OCI-LY7 (cell line): ENCODE measurements at regions of chr1 and their contacts with region 1.

Region 1: GRCh38 chr1:230120926-230121381 is 53.9 kb downstream of the GALNT2 start:
- DNase-seq: peak; percentile 72
- H3K4me3 ChIP-seq: peak overlapping the region; percentile 40
- H3K27ac ChIP-seq: peak overlapping the region; percentile 95
- H3K4me1 ChIP-seq: peaks cover 78% of the 10 kb centered on the region
- CTCF ChIP-seq: peak; percentile 82

Region 2: GRCh38 chr1:229661022-229661877 is 459.7 kb before region 1 on chr1:
- CTCF ChIA-PET with region 1: no interaction called
- POLR2A ChIA-PET with region 1: no interaction called
- intact Hi-C with region 1: loop called (anchors 5 kb)
- DNase-seq: peak; percentile 79
- H3K4me3 ChIP-seq: no peak overlapping the region
- H3K27ac ChIP-seq: no peak overlapping the region
- H3K4me1 ChIP-seq: peaks cover 29% of the 10 kb centered on the region
- CTCF ChIP-seq: peak; percentile 94

Region 3: GRCh38 chr1:229694053-229694693 is 426.8 kb before region 1 on chr1:
- CTCF ChIA-PET with region 1: no interaction called
- POLR2A ChIA-PET with region 1: no interaction called
- intact Hi-C with region 1: loop called (anchors 5 kb)
- DNase-seq: peak; percentile 86
- H3K4me3 ChIP-seq: peak overlapping the region; percentile 42
- H3K27ac ChIP-seq: peak overlapping the region; percentile 97
- H3K4me1 ChIP-seq: peaks cover 77% of the 10 kb centered on the region
- CTCF ChIP-seq: no peak

Region 4: DNA sequence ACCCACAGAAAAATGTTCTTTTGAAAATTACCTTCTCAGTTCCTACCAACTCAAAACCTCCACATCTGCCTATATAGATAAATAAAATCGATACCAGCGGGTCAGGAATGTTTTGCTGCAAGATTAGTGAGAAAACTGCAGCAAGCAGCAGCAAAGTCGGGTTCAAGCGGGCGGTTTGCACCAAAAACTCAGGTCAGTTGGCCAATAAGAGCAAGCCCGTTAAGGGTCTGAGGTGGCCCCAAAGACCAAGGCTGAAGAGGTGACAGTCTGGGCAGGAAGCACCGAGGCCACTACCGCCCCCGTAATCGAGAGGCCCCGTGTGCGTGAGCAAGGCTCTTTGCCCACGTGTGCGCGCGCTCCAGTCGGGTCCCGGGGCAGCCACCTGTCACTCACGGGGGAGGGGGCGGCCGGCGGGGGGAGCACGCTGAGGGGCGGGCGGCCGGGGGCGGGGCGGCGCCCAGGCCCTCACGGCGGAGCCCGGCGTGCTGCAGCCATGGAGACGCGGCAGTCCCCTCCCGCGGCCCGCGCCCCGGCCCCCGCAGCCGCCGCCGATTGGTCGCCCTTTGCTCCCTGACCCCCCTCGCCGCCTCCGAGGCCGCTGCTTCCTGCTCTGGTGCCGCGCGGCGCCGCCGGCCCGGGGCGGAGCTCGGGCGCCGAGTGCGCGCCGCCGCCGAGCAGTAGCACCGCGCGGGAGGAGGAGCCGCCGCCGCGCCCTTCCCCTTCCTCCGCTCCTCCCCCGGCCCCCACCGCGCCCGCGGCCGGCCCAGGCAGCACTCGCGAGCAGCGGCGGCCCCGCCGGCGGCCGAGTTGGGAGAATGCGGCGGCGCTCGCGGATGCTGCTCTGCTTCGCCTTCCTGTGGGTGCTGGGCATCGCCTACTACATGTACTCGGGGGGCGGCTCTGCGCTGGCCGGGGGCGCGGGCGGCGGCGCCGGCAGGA is 54.2 kb before region 1 on chr1 and contains the start of gene GALNT2:
- CTCF ChIA-PET with region 1: no interaction called
- POLR2A ChIA-PET with region 1: interaction called, 5 read pairs
- intact Hi-C with region 1: loop called (anchors 1 kb)
- DNase-seq: peak; percentile 93
- H3K4me3 ChIP-seq: peak within 1 kb of the TSS; percentile 92
- H3K27ac ChIP-seq: peak within 1 kb of the TSS; percentile 53
- H3K4me1 ChIP-seq: peaks cover 26% of the 10 kb centered on the region
- CTCF ChIP-seq: no peak
- total RNA-seq, gene GALNT2: 26.3 and 29.9 TPM in 2 replicates

Region 5: DNA sequence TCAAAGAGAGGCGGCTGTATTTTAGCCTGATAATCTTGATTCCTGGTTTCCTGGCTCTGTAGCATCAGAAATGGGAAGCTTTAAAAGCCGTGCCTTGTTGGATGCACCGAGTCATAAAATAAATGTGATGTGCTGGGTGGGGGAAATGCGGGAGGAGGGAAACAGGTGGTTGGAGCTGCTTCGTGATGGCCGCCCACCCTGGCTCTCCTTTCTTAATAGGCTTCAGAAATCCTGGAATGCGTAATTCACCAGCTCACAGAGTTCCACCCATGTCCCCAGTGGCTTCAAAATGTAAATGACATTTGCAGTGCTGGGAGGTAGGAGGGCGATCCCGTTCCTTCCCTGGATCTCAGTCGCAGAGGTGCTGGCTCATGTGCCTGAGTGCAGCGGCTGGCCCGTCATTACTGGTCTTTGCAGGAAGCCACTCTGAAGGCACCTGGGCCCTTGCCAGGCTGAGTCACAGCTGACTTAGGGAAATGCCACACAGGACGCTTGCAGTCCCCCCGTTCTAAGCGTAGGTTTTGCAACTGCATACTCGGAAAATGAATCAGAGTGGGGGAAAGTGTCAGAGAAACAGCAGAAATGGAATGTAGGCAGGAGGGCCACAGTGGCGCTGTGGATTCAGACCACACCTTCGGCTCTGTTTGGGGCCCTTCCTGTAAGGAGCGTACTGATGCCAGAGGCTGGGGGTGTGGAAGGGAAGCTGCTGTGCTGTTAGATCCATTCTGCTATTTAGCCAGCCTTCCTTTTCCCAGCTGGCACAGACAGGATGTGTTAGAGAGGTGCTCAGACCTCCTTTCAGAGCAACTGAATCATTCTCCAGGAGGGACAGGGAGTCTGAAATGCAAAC is 16.3 kb before region 1 on chr1:
- CTCF ChIA-PET with region 1: interaction called, 5 read pairs
- POLR2A ChIA-PET with region 1: interaction called, 26 read pairs
- intact Hi-C with region 1: loop called (anchors 2 kb)
- DNase-seq: peak; percentile 57
- H3K4me3 ChIP-seq: no peak overlapping the region
- H3K27ac ChIP-seq: no peak overlapping the region
- H3K4me1 ChIP-seq: peaks cover 77% of the 10 kb centered on the region
- CTCF ChIP-seq: no peak

Region 6: GRCh38 chr1:230109895-230110667 is 10.9 kb before region 1 on chr1:
- CTCF ChIA-PET with region 1: interaction called, 5 read pairs
- POLR2A ChIA-PET with region 1: interaction called, 26 read pairs
- intact Hi-C with region 1: loop called (anchors 1 kb)
- DNase-seq: peak; percentile 88
- H3K4me3 ChIP-seq: peak overlapping the region; percentile 25
- H3K27ac ChIP-seq: peak overlapping the region; percentile 79
- H3K4me1 ChIP-seq: peaks cover 80% of the 10 kb centered on the region
- CTCF ChIP-seq: peak; percentile 61

Region 7: DNA sequence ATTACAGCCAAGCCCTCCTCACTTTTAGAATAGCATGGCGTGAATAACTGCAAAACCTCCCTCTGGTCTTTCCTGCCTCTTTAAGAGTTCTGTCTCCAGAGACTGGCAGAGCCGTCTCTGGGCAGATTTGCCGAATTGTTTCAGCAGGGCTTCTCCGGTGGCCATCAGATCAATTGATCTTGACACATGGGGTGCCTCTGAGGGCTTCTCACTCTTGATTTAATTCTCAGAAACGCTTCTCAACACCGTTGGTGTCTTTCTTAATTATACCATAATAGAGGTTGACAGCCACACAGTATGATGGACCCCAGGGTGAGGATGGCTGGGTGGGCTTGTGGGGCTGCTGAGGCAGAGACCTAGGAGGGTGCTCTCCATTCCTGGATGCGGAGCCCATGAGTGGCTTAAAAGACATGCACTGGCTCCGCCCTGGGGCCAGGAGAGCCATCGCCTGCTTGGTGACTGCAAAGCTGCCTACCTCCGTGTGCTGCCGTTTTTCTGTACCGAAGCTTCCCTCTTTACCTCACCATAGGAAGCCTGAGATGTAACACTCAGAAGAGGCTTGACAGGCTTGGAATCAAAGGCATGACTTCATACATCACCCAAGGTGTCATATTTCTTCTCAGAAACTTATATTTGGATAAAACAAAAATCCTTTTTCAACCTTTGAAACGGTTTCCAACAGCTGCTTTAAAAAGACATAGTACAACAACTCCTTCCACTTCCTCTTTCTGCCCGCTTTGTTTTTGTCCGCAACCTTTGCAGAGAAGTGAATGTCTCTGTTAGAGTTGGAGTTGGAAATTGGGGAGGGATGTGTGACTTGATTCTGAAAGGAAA is 29.0 kb after region 1 on chr1:
- CTCF ChIA-PET with region 1: interaction called, 7 read pairs
- POLR2A ChIA-PET with region 1: interaction called, 56 read pairs
- intact Hi-C with region 1: loop called (anchors 1 kb)
- DNase-seq: peak; percentile 82
- H3K4me3 ChIP-seq: peak overlapping the region; percentile 59
- H3K27ac ChIP-seq: peak overlapping the region; percentile 95
- H3K4me1 ChIP-seq: peaks cover 68% of the 10 kb centered on the region
- CTCF ChIP-seq: peak; percentile 41; the same call in 1 of the 2 replicates